ENCODE measurements at regions of chr9 and their contacts with region 1.

Region 1: DNA sequence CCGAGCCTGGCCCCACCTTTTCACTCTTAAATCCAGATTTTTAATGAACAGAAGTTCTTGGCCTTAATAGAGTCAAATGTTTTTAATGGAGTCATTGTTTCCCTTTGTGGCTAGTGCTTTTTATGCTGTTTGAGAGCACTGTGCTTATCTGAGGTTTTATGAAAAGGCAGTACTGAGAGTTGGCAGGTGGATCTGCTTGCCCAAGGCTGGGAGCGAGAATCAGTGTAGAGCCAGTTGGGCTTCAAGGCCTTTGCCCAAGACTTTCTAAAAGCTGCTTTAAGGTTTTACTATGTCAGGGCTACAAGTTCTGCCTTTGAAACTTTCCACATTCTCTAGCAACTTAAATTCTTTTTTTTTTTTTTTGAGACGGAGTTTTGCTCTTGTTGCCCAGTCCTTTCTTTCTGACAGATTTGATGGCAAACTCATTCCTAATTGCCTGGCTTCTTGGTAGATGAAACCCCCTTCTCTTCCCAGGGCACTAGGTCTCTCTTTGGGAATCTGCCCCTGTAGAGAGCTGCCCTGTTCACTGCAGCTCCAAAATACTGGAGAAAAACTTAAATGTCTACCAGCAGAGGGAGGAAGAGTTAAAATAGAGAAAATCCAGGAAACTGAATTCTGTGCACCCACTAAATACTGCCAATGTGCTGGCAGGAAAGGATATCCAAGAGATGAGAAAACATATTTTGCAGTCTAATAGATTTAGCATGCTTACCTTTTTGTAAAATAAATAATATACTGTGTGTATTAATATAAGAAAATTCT is 36.9 kb upstream of the CDK20 start:
- DNase-seq: no peak
- H3K4me3 ChIP-seq: no peak overlapping the region
- H3K4me3 Mint-ChIP-seq: no peak overlapping the region
- H3K27ac ChIP-seq: no peak overlapping the region
- H3K27ac Mint-ChIP-seq: no peak overlapping the region
- H3K4me1 ChIP-seq: peaks cover 12% of the 10 kb centered on the region
- H3K4me1 Mint-ChIP-seq: peaks cover 7 to 12% (median 7%) of the 10 kb centered on the region in 4 donors
- H3K27me3 ChIP-seq: no peaks in the 10 kb centered on the region
- H3K27me3 Mint-ChIP-seq: peaks cover 2 to 5% of the 10 kb centered on the region in 2 donors

Region 2: DNA sequence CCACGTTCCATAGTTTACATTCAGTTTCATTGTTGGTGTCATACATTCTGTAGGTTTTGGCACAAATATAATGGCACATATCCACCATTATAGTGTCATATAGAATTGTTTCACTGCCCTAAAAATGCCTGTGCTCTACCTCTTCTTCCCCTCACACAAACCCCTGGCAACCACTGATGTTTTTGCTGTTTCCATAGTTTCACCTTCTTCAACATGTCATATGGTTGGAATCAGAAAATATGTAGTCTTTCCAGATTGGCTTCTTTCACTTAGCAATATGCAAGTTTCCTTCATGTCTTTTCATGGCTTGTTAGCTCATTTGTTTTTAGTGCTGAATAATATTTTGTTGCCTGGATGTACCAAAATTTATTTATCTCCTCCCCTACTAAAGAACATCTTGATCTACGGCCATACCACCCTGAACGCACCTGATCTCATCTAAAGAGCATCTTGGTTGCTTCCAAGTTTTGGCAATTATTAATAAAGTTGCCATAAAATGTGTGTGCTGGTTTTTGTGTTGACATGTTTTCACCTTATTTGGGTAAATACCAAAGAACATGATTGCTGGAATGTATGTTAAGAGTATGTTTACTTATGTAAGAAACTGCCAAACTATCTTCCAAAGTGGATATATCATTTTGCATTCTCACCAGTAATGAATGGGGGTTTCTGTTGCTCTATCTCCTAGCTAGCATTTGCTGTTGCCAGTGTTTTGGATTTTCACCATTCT is 19.9 kb before region 1 on chr9:
- CTCF ChIA-PET with region 1: no interaction called
- POLR2A ChIA-PET with region 1: no interaction called
- intact Hi-C with region 1: loop called (anchors 1 kb)
- DNase-seq: no peak
- H3K4me3 ChIP-seq: no peak overlapping the region
- H3K4me3 Mint-ChIP-seq: no peak overlapping the region
- H3K27ac ChIP-seq: no peak overlapping the region
- H3K27ac Mint-ChIP-seq: no peak overlapping the region
- H3K4me1 ChIP-seq: no peaks in the 10 kb centered on the region
- H3K4me1 Mint-ChIP-seq: no peaks in the 10 kb centered on the region
- H3K27me3 ChIP-seq: peaks cover 3% of the 10 kb centered on the region
- H3K27me3 Mint-ChIP-seq: peaks cover 6 to 13% of the 10 kb centered on the region in 2 donors

Region 3: GRCh38 chr9:88053856-88054501 is 42.8 kb after region 1 on chr9:
- CTCF ChIA-PET with region 1: no interaction called
- POLR2A ChIA-PET with region 1: no interaction called
- intact Hi-C with region 1: no loop called
- DNase-seq: no peak
- H3K4me3 ChIP-seq: no peak overlapping the region
- H3K4me3 Mint-ChIP-seq: no peak overlapping the region
- H3K27ac ChIP-seq: no peak overlapping the region
- H3K27ac Mint-ChIP-seq: no peak overlapping the region
- H3K4me1 ChIP-seq: no peaks in the 10 kb centered on the region
- H3K4me1 Mint-ChIP-seq: peaks cover 0 to 7% (median 1%) of the 10 kb centered on the region in 4 donors
- H3K27me3 ChIP-seq: no peaks in the 10 kb centered on the region
- H3K27me3 Mint-ChIP-seq: no peaks in the 10 kb centered on the region

Region 4: DNA sequence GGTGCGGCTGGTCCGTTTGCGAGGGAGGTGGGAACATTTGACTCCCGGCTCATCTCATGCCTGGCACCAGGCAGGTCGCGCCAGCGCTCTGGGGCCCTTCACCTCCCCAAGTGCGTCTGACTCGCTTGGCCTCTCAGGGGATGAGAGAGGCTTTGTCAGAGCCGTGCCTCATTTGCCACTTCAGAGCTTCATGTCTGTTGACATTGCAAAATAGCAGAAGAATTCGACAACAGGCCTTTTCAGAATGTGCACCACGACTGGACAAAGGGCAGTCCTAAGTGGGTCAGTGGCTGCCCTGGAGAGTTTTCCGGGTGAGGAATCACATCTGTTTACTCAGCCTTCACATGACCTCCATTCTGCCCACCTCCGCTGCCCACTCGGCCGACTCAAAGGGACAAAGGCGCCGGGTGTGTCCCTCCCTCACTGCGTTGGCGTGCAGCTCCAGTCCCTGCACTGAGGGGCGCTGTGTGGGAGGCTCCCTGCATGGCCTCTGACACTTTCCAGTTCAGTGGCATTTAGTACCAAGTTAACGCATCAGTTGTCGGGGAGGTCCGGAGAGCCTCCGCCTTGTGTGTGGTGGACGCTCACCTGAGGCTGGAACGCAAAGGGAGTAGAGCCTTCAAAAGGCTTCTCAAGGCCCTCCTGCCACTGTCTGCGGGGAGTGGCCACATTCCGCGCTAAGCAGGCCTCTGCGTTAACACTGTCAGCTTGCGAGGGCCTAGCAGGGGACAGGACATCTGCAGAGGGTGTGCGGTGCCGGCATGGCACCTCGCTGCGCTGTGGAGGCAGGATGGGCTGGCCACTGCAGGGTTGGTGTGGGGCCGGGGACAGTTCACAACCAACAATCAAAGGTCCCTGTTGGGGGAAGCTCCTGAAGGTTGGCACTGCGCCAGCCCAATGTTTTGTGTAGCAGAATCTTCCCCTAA is 695.3 kb after region 1 on chr9:
- CTCF ChIA-PET with region 1: no interaction called
- POLR2A ChIA-PET with region 1: no interaction called
- intact Hi-C with region 1: no loop called
- DNase-seq: no peak
- H3K4me3 ChIP-seq: no peak overlapping the region
- H3K4me3 Mint-ChIP-seq: no peak overlapping the region
- H3K27ac ChIP-seq: no peak overlapping the region
- H3K27ac Mint-ChIP-seq: no peak overlapping the region
- H3K4me1 ChIP-seq: no peaks in the 10 kb centered on the region
- H3K4me1 Mint-ChIP-seq: no peaks in the 10 kb centered on the region
- H3K27me3 ChIP-seq: no peaks in the 10 kb centered on the region
- H3K27me3 Mint-ChIP-seq: peaks cover 4 to 5% of the 10 kb centered on the region in 2 donors

Measured in CD4-positive, alpha-beta memory T cell (primary cell).